ENCODE measurements at regions of chr13 and their contacts with region 1.

Region 1: GRCh38 chr13:28636674-28637317 is 22.1 kb upstream of the POMP start:
- DNase-seq: peak; percentile 42
- ATAC-seq: peak; percentile 91

Region 2: DNA sequence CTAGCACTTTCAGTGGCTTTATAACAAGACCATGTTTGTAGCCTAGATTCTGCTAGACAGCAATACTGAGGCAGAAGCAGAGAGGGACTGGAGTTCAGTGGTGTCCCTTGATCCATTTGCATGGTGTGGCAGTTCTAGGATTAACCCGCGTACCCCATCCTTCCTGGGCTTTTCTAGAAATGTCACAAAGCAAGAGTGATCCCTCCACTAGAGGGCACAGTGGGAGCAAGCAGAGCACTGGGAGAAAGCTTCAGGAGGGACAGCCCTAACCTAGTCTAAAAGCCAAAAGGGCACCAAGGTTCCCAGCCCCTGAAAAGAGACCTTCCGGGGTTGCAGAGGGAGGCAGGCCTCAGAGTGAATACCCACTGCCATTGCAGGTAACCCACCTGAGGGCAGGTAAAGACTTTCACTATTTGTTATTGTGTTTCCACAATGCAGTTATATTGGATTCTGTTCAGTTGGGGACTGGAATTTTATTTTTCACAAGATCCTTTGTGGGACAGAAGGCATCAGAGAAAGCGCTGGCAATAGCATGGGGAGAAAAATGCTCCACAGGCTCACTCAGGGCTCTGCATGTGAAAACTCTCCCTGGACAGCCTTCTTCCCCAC is 312.5 kb before region 1 on chr13:
- intact Hi-C with region 1: loop called (anchors 2 kb)
- DNase-seq: no peak
- ATAC-seq: peak; percentile 87

Region 3: DNA sequence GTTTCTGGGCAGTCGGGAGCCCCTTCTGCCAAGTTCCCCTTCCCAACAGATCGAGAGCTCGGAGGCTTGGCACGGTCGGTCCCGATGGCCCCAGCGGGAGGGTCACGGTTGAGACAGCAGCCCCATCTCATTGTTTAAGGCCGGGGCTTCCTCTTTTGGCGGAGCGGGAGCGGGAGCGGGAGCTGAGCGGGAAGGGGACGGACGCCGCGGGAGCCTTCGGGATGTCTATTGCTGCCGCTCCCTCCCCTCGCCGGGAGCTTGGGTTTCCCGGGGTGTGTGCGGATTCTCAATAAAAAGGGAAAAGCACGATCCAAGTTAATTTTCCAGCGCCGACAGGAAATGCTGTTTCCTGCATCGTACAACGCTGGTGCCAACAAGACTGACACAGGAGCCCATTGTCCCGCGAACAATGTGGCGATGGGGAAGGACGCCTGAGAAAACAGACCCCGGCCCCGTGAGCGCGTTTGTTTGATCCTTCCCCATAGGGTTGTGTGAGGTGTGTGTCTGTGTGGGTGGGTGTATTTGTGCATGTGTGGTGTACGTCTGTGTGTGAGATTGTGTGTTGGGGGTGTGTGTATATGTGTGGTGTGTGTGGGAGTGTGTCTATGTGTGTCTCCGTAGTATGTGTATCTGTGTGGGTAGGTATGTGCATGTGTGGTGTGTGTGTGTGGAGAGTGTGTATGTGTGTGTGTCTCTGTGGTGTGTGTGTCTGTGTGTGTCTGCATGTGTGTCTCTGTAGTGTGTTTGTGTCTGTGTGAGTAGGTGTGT is 105.5 kb before region 1 on chr13:
- intact Hi-C with region 1: loop called (anchors 10 kb)
- DNase-seq: peak; percentile 73
- ATAC-seq: peak; percentile 47